ENCODE measurements at regions of chr19 and their contacts with region 1.

Region 1: DNA sequence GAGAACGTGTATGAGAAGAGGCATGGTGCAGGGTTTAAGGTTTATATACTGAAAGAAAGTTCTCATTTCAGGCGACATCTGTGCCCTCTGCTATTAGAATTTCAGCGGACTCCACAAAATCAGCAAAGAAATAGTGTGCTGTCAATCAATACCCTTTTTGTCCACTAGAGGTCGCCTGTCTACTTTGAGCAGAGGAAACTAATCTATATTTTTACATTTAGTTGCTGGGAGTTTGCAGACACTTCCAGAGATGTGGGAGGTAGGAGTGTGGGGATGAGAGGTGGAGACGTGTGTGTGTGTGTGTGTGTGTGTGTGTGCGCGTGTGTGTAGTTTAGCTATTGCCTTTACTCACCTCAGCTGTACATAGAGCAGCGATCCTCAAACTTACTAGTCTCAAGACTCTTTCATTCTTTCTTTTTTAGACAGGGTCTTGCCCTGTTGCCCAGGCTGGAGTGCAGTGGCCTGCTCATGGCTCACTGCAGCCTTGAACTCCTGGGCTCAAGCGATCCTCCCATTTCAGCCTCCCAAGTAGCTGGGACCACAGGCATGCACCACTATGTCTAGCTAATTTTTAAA is 9.7 kb downstream of the INAFM1 start:
- DNase-seq: peak; percentile 58
- H3K4me3 Mint-ChIP-seq: no peak overlapping the region
- H3K27ac Mint-ChIP-seq: no peak overlapping the region
- H3K4me1 Mint-ChIP-seq: peaks cover 6% of the 10 kb centered on the region
- H3K27me3 Mint-ChIP-seq: no peaks in the 10 kb centered on the region

Region 2: GRCh38 chr19:47273313-47273977 is 11.0 kb before region 1 on chr19:
- CTCF ChIA-PET with region 1: interaction called, 16 read pairs
- intact Hi-C with region 1: no loop called
- DNase-seq: peak; percentile 90
- H3K4me3 Mint-ChIP-seq: peak overlapping the region; percentile 96
- H3K27ac Mint-ChIP-seq: peak overlapping the region; percentile 97
- H3K4me1 Mint-ChIP-seq: peaks cover 22% of the 10 kb centered on the region
- H3K27me3 Mint-ChIP-seq: no peaks in the 10 kb centered on the region

Region 3: DNA sequence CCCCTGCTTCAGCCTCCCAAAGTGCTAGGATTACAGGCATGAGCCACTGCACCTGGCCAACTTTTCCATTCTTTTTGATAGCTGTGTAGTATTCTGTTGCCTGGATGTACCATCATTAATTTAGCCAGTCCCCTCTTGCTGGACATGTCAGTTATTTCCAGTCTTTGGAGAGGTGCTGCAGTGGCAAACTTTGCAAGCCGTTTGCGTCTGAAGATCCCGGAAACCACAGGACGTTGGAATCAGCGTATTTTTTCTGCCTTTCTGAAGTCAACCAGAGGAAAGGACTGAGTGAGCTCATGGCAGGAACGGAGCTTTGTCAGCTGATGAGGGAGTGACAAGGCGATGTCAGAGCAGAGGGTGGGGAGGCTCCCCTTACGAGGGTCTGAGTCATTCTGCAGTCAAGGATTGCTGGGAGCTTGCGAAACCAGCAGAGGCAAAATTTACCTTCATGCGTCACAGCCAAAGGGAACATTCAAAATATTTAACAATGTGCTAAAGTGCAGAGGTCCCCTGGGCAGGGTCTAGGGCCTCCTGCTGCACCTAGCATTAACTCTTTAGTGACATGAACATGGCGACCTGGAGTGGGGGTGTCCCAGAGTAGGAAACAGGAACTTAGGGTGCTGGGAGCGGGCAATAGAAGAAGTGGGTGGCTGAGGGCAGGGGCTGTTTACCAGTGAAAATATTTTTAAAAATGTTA is 30.9 kb after region 1 on chr19:
- CTCF ChIA-PET with region 1: interaction called, 3 read pairs
- intact Hi-C with region 1: loop called (anchors 1 kb)
- DNase-seq: peak; percentile 63
- H3K4me3 Mint-ChIP-seq: no peak overlapping the region
- H3K27ac Mint-ChIP-seq: no peak overlapping the region
- H3K4me1 Mint-ChIP-seq: peaks cover 3% of the 10 kb centered on the region
- H3K27me3 Mint-ChIP-seq: peaks cover 15% of the 10 kb centered on the region

Region 4: DNA sequence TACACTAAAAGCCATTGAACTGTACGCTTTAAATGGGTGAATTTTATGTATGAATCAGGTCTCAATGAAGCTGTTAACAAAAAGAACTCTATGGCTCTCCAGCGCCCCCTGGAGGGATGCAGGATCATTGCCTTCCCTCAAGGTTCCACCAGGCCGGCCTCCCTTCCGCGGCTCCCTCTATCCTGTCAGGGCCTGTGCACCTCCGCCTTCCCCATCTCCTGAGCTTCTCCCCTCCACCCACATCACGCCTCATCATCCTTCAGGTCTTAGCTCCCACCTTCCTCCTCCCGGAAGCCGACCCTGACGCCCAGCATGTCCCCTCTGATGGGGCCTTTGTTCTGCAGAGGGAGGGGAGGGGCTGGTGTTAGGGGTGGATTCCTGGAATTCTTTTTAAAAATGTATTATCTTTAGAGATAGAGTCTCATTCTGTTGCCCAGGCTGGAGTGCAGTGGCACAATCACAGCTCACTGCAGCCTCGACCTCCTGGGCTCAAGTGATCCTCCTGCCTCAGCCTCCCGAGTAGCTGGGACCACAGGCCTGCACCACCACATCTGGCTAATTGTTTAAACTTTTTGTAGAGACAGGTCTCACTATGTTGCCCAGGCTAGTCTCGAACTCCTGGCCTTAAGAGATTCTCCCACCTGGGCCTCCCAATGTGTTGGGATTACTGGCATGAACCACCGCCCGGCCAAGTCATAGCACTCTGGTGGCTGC is 107.3 kb after region 1 on chr19:
- CTCF ChIA-PET with region 1: interaction called, 8 read pairs
- intact Hi-C with region 1: loop called (anchors 1 kb)
- DNase-seq: peak; percentile 91
- H3K4me3 Mint-ChIP-seq: no peak overlapping the region
- H3K27ac Mint-ChIP-seq: no peak overlapping the region
- H3K4me1 Mint-ChIP-seq: peaks cover 2% of the 10 kb centered on the region
- H3K27me3 Mint-ChIP-seq: peaks cover 2% of the 10 kb centered on the region

Region 5: GRCh38 chr19:47428177-47428894 is 143.9 kb after region 1 on chr19:
- CTCF ChIA-PET with region 1: interaction called, 3 read pairs
- intact Hi-C with region 1: loop called (anchors 5 kb)
- DNase-seq: peak; percentile 94
- H3K4me3 Mint-ChIP-seq: no peak overlapping the region
- H3K27ac Mint-ChIP-seq: no peak overlapping the region
- H3K4me1 Mint-ChIP-seq: peaks cover 15% of the 10 kb centered on the region
- H3K27me3 Mint-ChIP-seq: peaks cover 49% of the 10 kb centered on the region